ENCODE measurements at regions of chr13 and their contacts with region 1.

Region 1: GRCh38 chr13:26132756-26133155 is 80.9 kb upstream of the SHISA2 start:
- DNase-seq: peak in 31 of 42 donors; percentile 5 to 60 (median 27)

Region 2: DNA sequence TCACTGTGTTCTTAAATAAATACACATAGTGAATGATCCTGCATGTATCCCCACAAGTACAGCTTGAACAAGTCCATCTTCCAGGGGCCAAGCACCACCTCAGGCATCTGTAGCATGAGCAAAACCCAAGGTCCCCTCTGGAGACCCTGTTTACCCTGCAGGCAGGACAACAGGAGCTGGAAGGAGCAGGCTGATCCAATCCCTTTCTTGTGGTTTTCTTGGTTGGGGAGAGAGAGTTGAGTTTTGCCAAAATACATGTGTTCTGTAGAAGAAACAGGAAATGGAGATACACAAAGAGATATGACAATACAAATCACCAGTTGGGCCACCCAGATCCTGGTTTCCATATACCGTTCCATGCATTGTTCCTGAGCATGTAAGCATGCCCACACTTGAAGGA is 173.8 kb before region 1 on chr13:
- intact Hi-C with region 1: no loop called
- DNase-seq: no peak

Region 3: DNA sequence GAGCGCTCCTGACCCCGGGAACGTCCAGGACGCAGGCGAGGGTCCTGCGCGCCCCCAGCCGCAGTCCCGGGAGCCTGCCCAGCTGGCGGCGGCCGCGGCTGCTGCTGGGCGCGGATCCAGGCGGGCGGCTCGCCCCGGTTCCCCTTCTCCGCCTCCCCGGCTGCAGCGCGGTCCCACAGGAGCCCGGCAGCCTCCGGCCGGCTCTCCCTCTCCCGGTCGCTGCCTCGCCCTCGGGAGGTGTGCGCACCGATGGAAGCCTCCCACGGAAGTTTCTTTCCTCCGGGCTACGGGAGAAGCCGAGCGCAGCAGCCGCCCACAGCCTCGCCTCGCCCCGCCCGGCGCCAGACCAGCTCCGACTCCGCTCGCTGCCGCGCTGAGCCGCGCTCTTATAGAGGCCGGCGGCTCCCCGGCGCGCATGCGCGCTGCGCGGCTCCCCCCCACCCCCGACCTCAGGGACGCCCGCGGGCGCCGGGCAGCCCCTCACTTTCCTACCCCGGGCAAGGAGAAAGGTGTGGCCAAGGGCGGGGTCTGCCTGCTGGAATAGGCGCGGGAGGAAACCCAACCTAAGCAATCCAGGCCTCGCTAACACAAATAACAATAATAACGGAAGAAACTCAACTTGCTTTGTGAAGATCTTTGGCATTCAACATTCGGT is 81.0 kb before region 1 on chr13 and contains the start of gene SHISA2:
- intact Hi-C with region 1: no loop called
- DNase-seq: peak in 38 of 42 donors; percentile 35 to 88 (median 58)

Region 4: DNA sequence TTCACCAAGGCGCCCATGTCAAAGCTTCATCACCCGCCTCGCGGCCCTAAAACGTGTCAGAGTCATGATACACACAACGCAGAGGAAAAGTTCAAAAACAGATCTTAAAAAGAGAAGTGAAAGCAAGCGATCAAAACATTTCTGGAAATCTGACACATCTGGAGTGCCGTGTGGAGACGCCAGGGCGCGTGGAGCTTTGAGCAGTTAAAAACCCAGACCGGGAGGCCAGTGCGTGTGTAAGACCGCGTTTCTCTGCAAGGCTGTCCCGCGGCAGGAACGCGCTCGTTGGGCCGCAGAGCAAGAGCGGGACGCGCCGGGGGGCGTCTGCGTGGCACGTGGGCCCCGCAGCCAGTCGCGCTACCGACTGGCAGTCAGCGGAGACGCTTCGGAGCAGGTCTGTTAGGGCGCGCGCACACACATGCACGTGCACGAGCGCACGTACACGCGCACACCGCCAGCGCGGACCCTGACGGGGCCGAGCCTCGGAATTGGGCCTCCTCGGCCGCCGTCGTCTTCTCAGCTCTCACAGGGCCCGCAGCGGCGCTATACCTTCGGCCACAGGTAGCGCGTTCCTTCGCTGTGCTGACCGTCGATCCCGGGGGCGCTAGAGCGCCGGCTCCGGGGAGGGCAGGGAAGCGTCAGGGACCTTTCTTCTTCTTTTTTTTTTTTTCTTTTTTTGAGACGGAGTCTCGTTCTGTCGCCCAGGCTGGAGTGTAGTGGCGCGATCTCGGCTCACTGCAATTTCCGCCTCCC is 53.5 kb after region 1 on chr13:
- intact Hi-C with region 1: no loop called
- DNase-seq: peak; percentile 67 to 94 (median 86)

Region 5: DNA sequence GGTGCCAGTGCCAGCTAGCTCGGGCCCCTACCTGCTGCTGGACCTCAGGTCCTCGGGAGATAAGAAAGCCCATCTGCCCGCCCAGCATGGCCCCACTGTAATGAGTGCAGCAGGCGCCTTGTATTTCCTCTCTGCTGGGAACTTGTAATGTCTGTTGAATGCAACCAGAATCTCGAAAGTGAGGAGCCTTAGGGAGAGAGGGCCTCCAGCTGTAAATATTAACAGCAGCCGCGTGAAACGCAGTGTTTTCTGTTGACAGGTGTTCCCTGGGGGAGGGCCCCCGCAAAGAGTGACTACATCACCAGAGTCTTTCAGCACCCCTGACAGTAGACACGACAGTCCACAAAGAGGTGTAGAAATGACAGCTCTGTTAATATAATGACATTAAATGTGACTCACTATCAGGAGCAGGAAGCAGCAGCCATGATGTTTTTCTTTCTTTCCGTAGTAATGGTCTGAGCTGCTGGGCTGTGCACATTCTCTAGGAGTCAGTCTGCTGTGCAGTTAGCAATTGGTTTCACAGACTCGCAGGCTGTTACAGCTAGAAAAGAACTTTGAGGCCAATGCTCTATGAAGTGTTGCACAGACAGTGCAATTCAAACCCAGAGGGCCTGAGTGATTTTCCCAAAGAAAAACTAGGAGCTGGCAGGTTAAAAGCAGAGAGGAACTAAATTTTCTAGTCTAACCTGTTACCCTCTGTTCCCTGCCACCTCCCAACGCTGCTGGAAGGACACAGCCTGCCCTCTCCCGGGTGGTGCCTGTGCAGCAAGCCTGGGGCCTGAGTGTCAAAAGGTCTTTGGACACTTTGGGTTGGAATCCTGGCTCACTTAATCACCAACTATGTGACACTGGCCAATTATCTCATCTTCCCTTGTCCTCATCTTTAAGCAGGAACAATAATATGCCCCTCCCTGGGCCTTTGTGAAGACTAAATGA is 366.2 kb after region 1 on chr13:
- intact Hi-C with region 1: loop called (anchors 5 kb)
- DNase-seq: no peak

Measured in head of caudate nucleus (tissue), 42 donors.